CD8-positive, alpha-beta T cell (primary cell): ENCODE measurements at regions of chr17 and their contacts with region 1.

Region 1: GRCh38 chr17:49370971-49371834 is 9.2 kb upstream of the ZNF652 start:
- DNase-seq: no peak
- ATAC-seq: no peak
- H3K4me3 ChIP-seq: no peak overlapping the region
- H3K4me3 Mint-ChIP-seq: no peak overlapping the region
- H3K27ac ChIP-seq: no peak overlapping the region
- H3K27ac Mint-ChIP-seq: no peak overlapping the region
- H3K4me1 ChIP-seq: no peaks in the 10 kb centered on the region
- H3K4me1 Mint-ChIP-seq: peaks cover 12% of the 10 kb centered on the region
- H3K27me3 ChIP-seq: no peaks in the 10 kb centered on the region
- H3K27me3 Mint-ChIP-seq: no peaks in the 10 kb centered on the region
- CTCF ChIP-seq: no peak

Region 2: GRCh38 chr17:49170216-49170615 is 201.0 kb before region 1 on chr17:
- CTCF ChIA-PET with region 1: no interaction called
- POLR2A ChIA-PET with region 1: no interaction called
- intact Hi-C with region 1: loop called in 1 of 2 experiments (anchors 2 kb)
- DNase-seq: no peak
- ATAC-seq: no peak
- H3K4me3 ChIP-seq: no peak overlapping the region
- H3K4me3 Mint-ChIP-seq: no peak overlapping the region
- H3K27ac ChIP-seq: no peak overlapping the region
- H3K27ac Mint-ChIP-seq: no peak overlapping the region
- H3K4me1 ChIP-seq: no peaks in the 10 kb centered on the region
- H3K4me1 Mint-ChIP-seq: no peaks in the 10 kb centered on the region
- H3K27me3 ChIP-seq: no peaks in the 10 kb centered on the region
- H3K27me3 Mint-ChIP-seq: peaks cover 54% of the 10 kb centered on the region
- CTCF ChIP-seq: no peak

Region 3: GRCh38 chr17:49390548-49391324 is 19.5 kb after region 1 on chr17:
- CTCF ChIA-PET with region 1: interaction called, 30 read pairs
- POLR2A ChIA-PET with region 1: interaction called, 3 read pairs
- intact Hi-C with region 1: loop called (anchors 1 kb)
- DNase-seq: peak in 2 of 9 experiments; percentile 12 to 51
- ATAC-seq: no peak
- H3K4me3 ChIP-seq: no peak overlapping the region
- H3K4me3 Mint-ChIP-seq: peak overlapping the region; percentile 65
- H3K27ac ChIP-seq: peak overlapping the region in 1 of 2 experiments; percentile 88
- H3K27ac Mint-ChIP-seq: peak overlapping the region; percentile 94
- H3K4me1 ChIP-seq: peaks cover 51% of the 10 kb centered on the region
- H3K4me1 Mint-ChIP-seq: peaks cover 68% of the 10 kb centered on the region
- H3K27me3 ChIP-seq: no peaks in the 10 kb centered on the region
- H3K27me3 Mint-ChIP-seq: no peaks in the 10 kb centered on the region
- CTCF ChIP-seq: no peak

Region 4: DNA sequence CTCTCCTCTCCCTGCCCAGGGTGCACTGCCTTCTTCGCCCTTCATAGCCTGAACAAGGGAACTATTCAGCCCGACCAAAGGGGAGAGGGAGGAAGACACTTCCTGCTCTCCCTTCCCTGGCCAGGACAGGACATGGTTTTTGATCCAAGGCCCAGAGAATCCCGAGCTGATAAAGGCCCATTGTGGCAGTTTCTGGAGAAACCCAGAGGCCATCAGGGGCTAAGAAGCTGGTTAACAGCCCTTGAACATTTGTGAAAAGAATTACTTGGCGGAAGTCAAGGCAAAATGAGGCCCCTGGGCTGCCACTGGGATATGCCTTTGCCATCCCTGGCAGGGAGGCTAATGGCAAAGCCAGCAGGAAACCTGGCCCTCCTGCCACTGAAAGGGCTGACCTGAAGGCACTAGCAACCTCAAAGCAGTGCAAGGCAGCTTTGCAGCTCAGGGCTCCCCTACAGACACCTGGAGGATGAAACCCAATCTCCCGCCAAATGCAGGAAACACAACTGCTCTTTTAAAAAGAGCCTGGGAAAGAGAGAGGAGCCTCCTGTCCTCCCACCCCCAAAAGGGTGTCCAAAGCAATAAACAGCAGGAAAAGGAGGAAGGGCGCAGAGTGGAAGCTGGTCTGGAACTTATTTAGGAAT is 30.9 kb after region 1 on chr17:
- CTCF ChIA-PET with region 1: interaction called, 30 read pairs
- POLR2A ChIA-PET with region 1: no interaction called
- intact Hi-C with region 1: loop called in 1 of 2 experiments (anchors 5 kb)
- DNase-seq: no peak
- ATAC-seq: no peak
- H3K4me3 ChIP-seq: no peak overlapping the region
- H3K4me3 Mint-ChIP-seq: no peak overlapping the region
- H3K27ac ChIP-seq: peak overlapping the region in 1 of 2 experiments; percentile 81
- H3K27ac Mint-ChIP-seq: no peak overlapping the region
- H3K4me1 ChIP-seq: peaks cover 22% of the 10 kb centered on the region
- H3K4me1 Mint-ChIP-seq: peaks cover 24% of the 10 kb centered on the region
- H3K27me3 ChIP-seq: no peaks in the 10 kb centered on the region
- H3K27me3 Mint-ChIP-seq: no peaks in the 10 kb centered on the region
- CTCF ChIP-seq: no peak

Region 5: DNA sequence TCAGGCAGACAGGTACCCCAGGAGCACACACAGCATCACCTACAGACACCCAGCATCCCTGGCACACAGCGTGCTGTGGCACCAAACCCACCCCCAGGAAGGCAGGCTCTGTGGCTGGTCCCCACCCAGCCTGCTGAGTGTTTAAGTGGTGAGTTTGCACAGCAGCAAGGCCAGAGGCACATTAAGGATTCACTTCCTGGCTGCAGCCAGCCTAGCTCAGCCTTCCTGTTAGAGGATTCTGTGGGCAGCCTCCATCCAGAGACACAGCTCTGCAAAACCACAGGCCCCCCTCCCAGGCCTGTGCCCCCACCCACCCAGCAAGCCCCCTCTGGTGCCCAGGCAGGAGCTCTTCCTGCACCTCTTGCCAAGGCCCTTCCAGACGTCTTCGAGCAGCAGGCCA is 79.5 kb after region 1 on chr17:
- CTCF ChIA-PET with region 1: no interaction called
- POLR2A ChIA-PET with region 1: no interaction called
- intact Hi-C with region 1: no loop called
- DNase-seq: no peak
- ATAC-seq: no peak
- H3K4me3 ChIP-seq: no peak overlapping the region
- H3K4me3 Mint-ChIP-seq: no peak overlapping the region
- H3K27ac ChIP-seq: no peak overlapping the region
- H3K27ac Mint-ChIP-seq: no peak overlapping the region
- H3K4me1 ChIP-seq: peaks cover 8% of the 10 kb centered on the region
- H3K4me1 Mint-ChIP-seq: peaks cover 5% of the 10 kb centered on the region
- H3K27me3 ChIP-seq: no peaks in the 10 kb centered on the region
- H3K27me3 Mint-ChIP-seq: peaks cover 8% of the 10 kb centered on the region
- CTCF ChIP-seq: no peak

Region 6: GRCh38 chr17:50763716-50764475 is 1392.7 kb after region 1 on chr17:
- CTCF ChIA-PET with region 1: no interaction called
- POLR2A ChIA-PET with region 1: no interaction called
- intact Hi-C with region 1: no loop called
- DNase-seq: peak in 1 of 9 experiments; percentile 29
- ATAC-seq: no peak
- H3K4me3 ChIP-seq: no peak overlapping the region
- H3K4me3 Mint-ChIP-seq: no peak overlapping the region
- H3K27ac ChIP-seq: no peak overlapping the region
- H3K27ac Mint-ChIP-seq: no peak overlapping the region
- H3K4me1 ChIP-seq: peaks cover 10% of the 10 kb centered on the region
- H3K4me1 Mint-ChIP-seq: peaks cover 10% of the 10 kb centered on the region
- H3K27me3 ChIP-seq: peaks cover 0 to 2% of the 10 kb centered on the region in 2 experiments
- H3K27me3 Mint-ChIP-seq: peaks cover 12% of the 10 kb centered on the region
- CTCF ChIP-seq: no peak